CD4-positive, alpha-beta T cell (primary cell): ENCODE measurements at regions of chr5 and their contacts with region 1.

Region 1: GRCh38 chr5:14644623-14645237 is 19.8 kb upstream of the OTULIN start:
- DNase-seq: no peak
- ATAC-seq: no peak
- H3K4me3 ChIP-seq: no peak overlapping the region
- H3K4me3 Mint-ChIP-seq: no peak overlapping the region
- H3K27ac ChIP-seq: no peak overlapping the region
- H3K27ac Mint-ChIP-seq: no peak overlapping the region
- H3K4me1 ChIP-seq: no peaks in the 10 kb centered on the region
- H3K4me1 Mint-ChIP-seq: no peaks in the 10 kb centered on the region
- H3K27me3 ChIP-seq: peaks cover 3 to 5% of the 10 kb centered on the region in 2 experiments
- H3K27me3 Mint-ChIP-seq: peaks cover 35% of the 10 kb centered on the region
- CTCF ChIP-seq: no peak

Region 2: DNA sequence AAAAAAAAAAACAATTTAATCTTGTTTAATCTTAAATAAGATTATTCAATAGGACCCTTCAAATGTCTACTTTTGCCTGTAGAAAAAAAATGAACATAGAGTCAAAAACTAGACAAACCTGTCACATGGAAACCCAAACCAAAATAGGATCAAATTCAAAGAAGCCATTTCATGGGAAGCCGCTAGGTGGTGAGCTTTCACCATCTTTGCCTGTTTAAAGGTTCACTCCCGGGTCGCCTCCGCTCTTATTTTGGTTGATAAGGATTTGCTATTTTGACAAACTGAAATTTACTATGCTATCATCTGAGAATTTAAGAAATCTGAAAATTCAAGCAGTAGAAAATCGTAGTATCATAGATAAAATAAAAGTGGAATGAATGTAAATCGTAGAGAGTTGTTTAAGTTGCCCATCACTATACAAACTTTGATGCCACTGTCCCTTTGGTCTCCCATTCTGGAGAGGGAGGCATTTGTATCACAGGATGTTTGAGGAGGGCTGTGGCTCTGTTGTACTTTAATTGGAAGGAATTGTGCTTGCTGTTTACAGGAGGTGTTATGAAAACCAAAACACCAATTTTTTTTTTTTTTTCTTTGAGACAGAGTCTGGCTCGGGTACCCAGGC is 656.8 kb before region 1 on chr5:
- CTCF ChIA-PET with region 1: no interaction called
- POLR2A ChIA-PET with region 1: no interaction called
- intact Hi-C with region 1: loop called in 1 of 2 experiments (anchors 5 kb)
- DNase-seq: peak in 1 of 14 experiments; percentile 25
- ATAC-seq: no peak
- H3K4me3 ChIP-seq: no peak overlapping the region
- H3K4me3 Mint-ChIP-seq: no peak overlapping the region
- H3K27ac ChIP-seq: no peak overlapping the region
- H3K27ac Mint-ChIP-seq: no peak overlapping the region
- H3K4me1 ChIP-seq: no peaks in the 10 kb centered on the region
- H3K4me1 Mint-ChIP-seq: no peaks in the 10 kb centered on the region
- H3K27me3 ChIP-seq: no peaks in the 10 kb centered on the region
- H3K27me3 Mint-ChIP-seq: peaks cover 12% of the 10 kb centered on the region
- CTCF ChIP-seq: peak; percentile 33

Region 3: DNA sequence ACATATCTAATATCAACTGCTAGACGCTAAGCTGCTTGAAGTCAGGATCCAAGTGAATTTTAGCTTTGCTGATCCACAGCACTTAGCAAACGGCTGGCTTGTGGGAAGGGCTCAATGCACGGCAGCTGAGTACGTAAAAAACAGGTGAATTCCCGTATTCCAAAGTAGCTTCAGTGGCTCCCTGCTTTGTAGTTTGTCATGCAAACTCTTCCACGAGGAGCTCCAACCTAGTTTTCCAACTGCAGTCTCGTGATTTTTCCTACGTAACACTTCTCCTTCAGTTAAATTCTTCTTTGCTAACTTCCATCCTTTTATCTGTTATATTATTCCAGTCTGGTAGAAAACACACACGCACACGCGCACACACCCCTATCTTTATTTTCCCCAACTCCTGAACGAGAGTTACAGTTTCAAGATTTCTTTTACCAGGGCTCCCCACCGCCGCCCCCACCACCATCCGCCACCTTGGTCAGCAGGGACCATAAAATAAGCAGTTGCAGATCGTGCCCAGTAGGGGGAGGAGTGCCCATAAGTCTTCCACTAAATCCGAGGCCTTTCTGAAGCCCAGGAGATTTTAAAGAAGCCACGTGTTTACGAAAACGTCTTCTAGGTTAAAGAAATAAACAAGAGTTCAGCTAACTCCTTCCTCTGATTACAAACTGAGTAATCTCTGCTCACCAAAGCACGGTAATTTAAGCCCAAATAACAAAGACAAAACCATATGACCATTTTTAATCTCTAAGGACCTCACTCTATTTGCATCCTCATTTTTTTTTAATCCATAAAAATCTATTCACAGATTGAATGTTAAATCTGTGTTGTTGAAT is 536.3 kb before region 1 on chr5:
- CTCF ChIA-PET with region 1: no interaction called
- POLR2A ChIA-PET with region 1: no interaction called
- intact Hi-C with region 1: loop called in 1 of 2 experiments (anchors 5 kb)
- DNase-seq: peak in 7 of 14 experiments; percentile 1 to 65 (median 34)
- ATAC-seq: peak; percentile 67
- H3K4me3 ChIP-seq: no peak overlapping the region
- H3K4me3 Mint-ChIP-seq: no peak overlapping the region
- H3K27ac ChIP-seq: no peak overlapping the region
- H3K27ac Mint-ChIP-seq: no peak overlapping the region
- H3K4me1 ChIP-seq: no peaks in the 10 kb centered on the region
- H3K4me1 Mint-ChIP-seq: peaks cover 10% of the 10 kb centered on the region
- H3K27me3 ChIP-seq: no peaks in the 10 kb centered on the region
- H3K27me3 Mint-ChIP-seq: peaks cover 12% of the 10 kb centered on the region
- CTCF ChIP-seq: peak; percentile 57

Region 4: GRCh38 chr5:14351845-14352712 is 292.7 kb before region 1 on chr5:
- CTCF ChIA-PET with region 1: interaction called, 21 read pairs
- POLR2A ChIA-PET with region 1: interaction called, 8 read pairs
- intact Hi-C with region 1: loop called (anchors 1 kb)
- DNase-seq: peak; percentile 24 to 80 (median 46)
- ATAC-seq: peak; percentile 89
- H3K4me3 ChIP-seq: no peak overlapping the region
- H3K4me3 Mint-ChIP-seq: no peak overlapping the region
- H3K27ac ChIP-seq: no peak overlapping the region
- H3K27ac Mint-ChIP-seq: no peak overlapping the region
- H3K4me1 ChIP-seq: peaks cover 5% of the 10 kb centered on the region
- H3K4me1 Mint-ChIP-seq: no peaks in the 10 kb centered on the region
- H3K27me3 ChIP-seq: no peaks in the 10 kb centered on the region
- H3K27me3 Mint-ChIP-seq: no peaks in the 10 kb centered on the region
- CTCF ChIP-seq: peak; percentile 91

Region 5: GRCh38 chr5:14364576-14365472 is 279.9 kb before region 1 on chr5:
- CTCF ChIA-PET with region 1: interaction called, 55 read pairs
- POLR2A ChIA-PET with region 1: interaction called, 4 read pairs
- intact Hi-C with region 1: loop called (anchors 1 kb)
- DNase-seq: peak in 6 of 14 experiments; percentile 5 to 31 (median 14)
- ATAC-seq: no peak
- H3K4me3 ChIP-seq: no peak overlapping the region
- H3K4me3 Mint-ChIP-seq: no peak overlapping the region
- H3K27ac ChIP-seq: no peak overlapping the region
- H3K27ac Mint-ChIP-seq: no peak overlapping the region
- H3K4me1 ChIP-seq: peaks cover 17% of the 10 kb centered on the region
- H3K4me1 Mint-ChIP-seq: peaks cover 36% of the 10 kb centered on the region
- H3K27me3 ChIP-seq: peaks cover 0 to 4% of the 10 kb centered on the region in 2 experiments
- H3K27me3 Mint-ChIP-seq: no peaks in the 10 kb centered on the region
- CTCF ChIP-seq: no peak

Region 6: GRCh38 chr5:14399054-14399692 is 245.6 kb before region 1 on chr5:
- CTCF ChIA-PET with region 1: interaction called, 13 read pairs
- POLR2A ChIA-PET with region 1: interaction called, 6 read pairs
- intact Hi-C with region 1: loop called (anchors 1 kb)
- DNase-seq: peak in 4 of 14 experiments; percentile 51 to 73 (median 60)
- ATAC-seq: peak; percentile 57
- H3K4me3 ChIP-seq: no peak overlapping the region
- H3K4me3 Mint-ChIP-seq: no peak overlapping the region
- H3K27ac ChIP-seq: no peak overlapping the region
- H3K27ac Mint-ChIP-seq: no peak overlapping the region
- H3K4me1 ChIP-seq: no peaks in the 10 kb centered on the region
- H3K4me1 Mint-ChIP-seq: peaks cover 15% of the 10 kb centered on the region
- H3K27me3 ChIP-seq: no peaks in the 10 kb centered on the region
- H3K27me3 Mint-ChIP-seq: no peaks in the 10 kb centered on the region
- CTCF ChIP-seq: peak; percentile 77

Region 7: DNA sequence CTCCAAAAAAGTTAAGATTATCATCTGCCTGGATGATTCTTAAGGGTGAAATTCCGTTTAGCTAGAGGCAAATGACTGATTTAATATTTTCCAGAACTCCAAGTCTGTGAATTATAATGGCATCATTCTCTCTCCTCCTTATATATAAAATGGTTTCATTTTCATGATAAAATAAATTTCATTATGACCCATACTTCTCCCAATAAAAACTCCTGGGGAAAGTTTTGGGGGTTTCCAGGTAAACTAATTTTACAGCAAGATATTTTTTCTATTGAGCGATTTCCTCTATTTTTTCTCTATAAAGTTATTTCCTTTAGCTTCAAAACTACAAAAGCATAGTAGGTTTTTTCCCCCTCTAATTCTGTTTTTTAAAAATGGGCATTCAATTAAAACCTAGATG is 12.2 kb after region 1 on chr5:
- CTCF ChIA-PET with region 1: interaction called, 11 read pairs
- POLR2A ChIA-PET with region 1: interaction called, 3 read pairs
- intact Hi-C with region 1: no loop called
- DNase-seq: no peak
- ATAC-seq: no peak
- H3K4me3 ChIP-seq: no peak overlapping the region
- H3K4me3 Mint-ChIP-seq: no peak overlapping the region
- H3K27ac ChIP-seq: no peak overlapping the region
- H3K27ac Mint-ChIP-seq: no peak overlapping the region
- H3K4me1 ChIP-seq: no peaks in the 10 kb centered on the region
- H3K4me1 Mint-ChIP-seq: peaks cover 23% of the 10 kb centered on the region
- H3K27me3 ChIP-seq: no peaks in the 10 kb centered on the region
- H3K27me3 Mint-ChIP-seq: no peaks in the 10 kb centered on the region
- CTCF ChIP-seq: no peak

Region 8: DNA sequence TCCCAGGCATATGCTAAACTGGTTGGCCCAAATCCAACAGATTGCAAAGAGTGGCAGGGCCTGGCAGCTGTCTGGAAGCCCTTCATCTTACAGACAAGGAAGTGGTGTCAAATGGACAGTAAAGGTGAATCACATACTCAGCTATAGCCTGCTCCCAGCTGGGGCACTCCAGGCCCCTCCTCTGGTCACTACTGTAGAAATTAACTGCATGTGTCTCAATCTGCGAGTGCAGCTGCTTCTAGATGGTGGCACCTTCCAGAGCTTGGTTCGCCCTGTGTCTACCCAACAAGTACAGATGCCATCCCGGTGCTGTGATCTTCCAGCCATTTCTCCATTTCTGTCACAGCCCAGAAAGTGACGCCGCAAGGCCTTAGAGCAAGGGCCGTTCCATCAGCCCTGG is 70.0 kb after region 1 on chr5:
- CTCF ChIA-PET with region 1: no interaction called
- POLR2A ChIA-PET with region 1: no interaction called
- intact Hi-C with region 1: no loop called
- DNase-seq: no peak
- ATAC-seq: no peak
- H3K4me3 ChIP-seq: no peak overlapping the region
- H3K4me3 Mint-ChIP-seq: no peak overlapping the region
- H3K27ac ChIP-seq: peak overlapping the region in 1 of 2 donors; percentile 22
- H3K27ac Mint-ChIP-seq: peak overlapping the region; percentile 61
- H3K4me1 ChIP-seq: peaks cover 5% of the 10 kb centered on the region
- H3K4me1 Mint-ChIP-seq: peaks cover 30% of the 10 kb centered on the region
- H3K27me3 ChIP-seq: no peaks in the 10 kb centered on the region
- H3K27me3 Mint-ChIP-seq: no peaks in the 10 kb centered on the region
- CTCF ChIP-seq: no peak

Region 9: GRCh38 chr5:15079566-15079965 is 434.8 kb after region 1 on chr5:
- CTCF ChIA-PET with region 1: no interaction called
- POLR2A ChIA-PET with region 1: no interaction called
- intact Hi-C with region 1: no loop called
- DNase-seq: no peak
- ATAC-seq: no peak
- H3K4me3 ChIP-seq: no peak overlapping the region
- H3K4me3 Mint-ChIP-seq: no peak overlapping the region
- H3K27ac ChIP-seq: no peak overlapping the region
- H3K27ac Mint-ChIP-seq: no peak overlapping the region
- H3K4me1 ChIP-seq: no peaks in the 10 kb centered on the region
- H3K4me1 Mint-ChIP-seq: no peaks in the 10 kb centered on the region
- H3K27me3 ChIP-seq: no peaks in the 10 kb centered on the region
- H3K27me3 Mint-ChIP-seq: peaks cover 6% of the 10 kb centered on the region
- CTCF ChIP-seq: no peak